Esophagus muscularis mucosa (tissue), 4 donors: ENCODE measurements at regions of chr21 and their contacts with region 1.

Region 1: DNA sequence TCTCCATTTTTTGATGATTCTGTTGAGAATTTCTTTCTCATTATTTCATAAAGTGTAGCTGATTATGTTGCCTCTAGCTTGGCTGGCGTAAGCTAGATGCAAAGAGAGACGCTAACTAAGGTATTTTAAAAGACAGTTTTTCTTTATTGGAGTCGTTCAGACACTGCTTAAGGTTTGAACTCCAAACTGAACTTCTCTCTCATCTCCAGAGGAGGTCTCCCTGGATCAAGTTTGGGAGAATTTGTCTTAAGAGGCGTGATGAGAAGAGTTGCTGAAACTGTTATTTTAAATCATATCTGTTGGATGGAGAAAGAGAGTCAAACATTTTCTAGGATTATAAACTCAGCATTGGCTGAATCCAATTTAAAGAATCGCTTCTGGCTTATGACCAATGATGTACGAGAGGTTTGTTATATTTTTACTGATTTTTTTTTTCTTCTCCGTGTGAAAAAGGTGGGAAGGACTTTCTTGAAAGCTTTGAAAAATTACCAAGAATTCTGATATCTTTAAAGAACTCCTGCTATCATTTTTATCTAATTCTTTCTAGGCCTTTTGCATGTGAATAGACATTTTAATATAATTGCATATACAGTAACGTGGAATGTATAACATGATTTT is 34.0 kb downstream of the MAP3K7CL start:
- DNase-seq: no peak
- H3K4me3 ChIP-seq: no peak overlapping the region
- H3K27ac ChIP-seq: no peak overlapping the region
- H3K4me1 ChIP-seq: peaks cover 6 to 15% (median 12%) of the 10 kb centered on the region in 4 donors
- H3K27me3 ChIP-seq: no peaks in the 10 kb centered on the region
- CTCF ChIP-seq: peak; percentile 66 to 84 (median 79)
- EP300 ChIP-seq: no peak
- POLR2A ChIP-seq: no peak

Region 2: DNA sequence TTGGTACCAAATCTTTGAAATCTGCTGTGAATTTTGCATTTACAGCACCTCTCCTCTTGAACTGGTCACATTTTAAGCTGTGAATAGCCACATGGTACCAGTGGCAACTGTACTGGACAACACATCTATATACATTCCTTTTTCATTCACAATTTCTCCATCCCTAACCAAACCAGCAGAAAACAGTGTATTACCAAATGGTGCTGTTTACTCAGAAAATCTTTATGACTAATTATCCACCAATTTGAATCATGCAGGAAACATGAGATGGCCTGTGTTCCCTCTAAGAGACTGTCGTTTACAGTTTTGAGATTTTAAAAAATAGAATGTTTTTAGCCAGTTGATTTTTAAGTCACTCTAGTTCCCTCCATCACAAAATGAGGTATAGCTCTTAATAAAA is 73.4 kb before region 1 on chr21:
- intact Hi-C with region 1: loop called (anchors 5 kb)
- DNase-seq: no peak
- H3K4me3 ChIP-seq: no peak overlapping the region
- H3K27ac ChIP-seq: no peak overlapping the region
- H3K4me1 ChIP-seq: peaks cover 0 to 11% (median 5%) of the 10 kb centered on the region in 4 donors
- H3K27me3 ChIP-seq: no peaks in the 10 kb centered on the region
- CTCF ChIP-seq: no peak
- EP300 ChIP-seq: no peak
- POLR2A ChIP-seq: no peak

Region 3: GRCh38 chr21:29298348-29299045 is 134.1 kb after region 1 on chr21 and contains the start of gene BACH1:
- intact Hi-C with region 1: loop called (anchors 5 kb)
- DNase-seq: peak; percentile 94
- H3K4me3 ChIP-seq: peak within 1 kb of the TSS; percentile 83 to 98 (median 94)
- H3K27ac ChIP-seq: peak within 1 kb of the TSS; percentile 95 to 98 (median 96)
- H3K4me1 ChIP-seq: peaks cover 26 to 48% (median 43%) of the 10 kb centered on the region in 4 donors
- H3K27me3 ChIP-seq: no peaks in the 10 kb centered on the region
- CTCF ChIP-seq: peak; percentile 57 to 67 (median 60)
- EP300 ChIP-seq: no peak
- POLR2A ChIP-seq: peak; percentile 85
- total RNA-seq, gene BACH1: 43.8 to 86.3 (median 50.9) TPM

Region 4: GRCh38 chr21:29349702-29350101 is 185.3 kb after region 1 on chr21:
- intact Hi-C with region 1: loop called (anchors 2 kb)
- DNase-seq: no peak
- H3K4me3 ChIP-seq: no peak overlapping the region
- H3K27ac ChIP-seq: no peak overlapping the region
- H3K4me1 ChIP-seq: peaks cover 26 to 48% (median 42%) of the 10 kb centered on the region in 4 donors
- H3K27me3 ChIP-seq: no peaks in the 10 kb centered on the region
- CTCF ChIP-seq: no peak
- EP300 ChIP-seq: no peak
- POLR2A ChIP-seq: no peak

Region 5: GRCh38 chr21:29372063-29372802 is 207.8 kb after region 1 on chr21:
- intact Hi-C with region 1: loop called (anchors 2 kb)
- DNase-seq: no peak
- H3K4me3 ChIP-seq: no peak overlapping the region
- H3K27ac ChIP-seq: no peak overlapping the region
- H3K4me1 ChIP-seq: no peaks in the 10 kb centered on the region
- H3K27me3 ChIP-seq: no peaks in the 10 kb centered on the region
- CTCF ChIP-seq: peak; percentile 73 to 85 (median 76)
- EP300 ChIP-seq: no peak
- POLR2A ChIP-seq: no peak